PC-9 (cell line): ENCODE measurements at regions of chr4 and their contacts with region 1.

Region 1: GRCh38 chr4:47836641-47837093 is 1.2 kb downstream of the CORIN start:
- DNase-seq: peak; percentile 59 to 74
- H3K4me3 ChIP-seq: peak overlapping the region; percentile 73
- H3K27ac ChIP-seq: no peak overlapping the region
- H3K4me1 ChIP-seq: no peaks in the 10 kb centered on the region; the same call in 1 of the 2 replicates
- H3K27me3 ChIP-seq: no peaks in the 10 kb centered on the region
- CTCF ChIP-seq: peak; percentile 70

Region 2: DNA sequence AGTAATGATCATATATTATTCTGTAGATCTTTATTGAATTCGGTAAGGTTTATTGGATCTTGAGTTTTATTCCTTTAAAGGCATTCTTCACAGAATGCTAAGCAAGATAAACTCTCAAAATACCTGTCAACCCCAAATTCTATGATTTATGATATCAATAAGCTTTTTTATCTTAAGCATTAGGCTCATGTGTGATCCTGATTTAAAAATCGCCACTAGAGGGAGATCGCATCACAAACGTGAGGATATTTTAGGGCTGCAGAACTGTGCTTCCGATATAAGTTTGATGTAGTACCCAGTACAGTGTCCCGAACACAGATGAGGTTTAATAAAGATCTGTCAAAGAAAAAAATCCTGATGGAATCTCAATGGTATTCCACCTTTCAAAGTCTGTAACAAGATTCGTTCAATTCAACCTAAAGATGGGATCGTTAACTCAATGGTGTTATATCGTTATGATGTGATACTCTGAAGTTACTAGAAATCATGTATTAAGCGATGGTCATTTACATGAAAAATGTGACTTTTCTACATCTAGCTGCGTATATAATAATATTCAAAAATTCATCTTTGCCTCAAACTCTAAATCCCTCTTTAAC is 167.8 kb before region 1 on chr4:
- CTCF ChIA-PET with region 1: interaction called, 5 read pairs
- POLR2A ChIA-PET with region 1: interaction called, 3 read pairs
- intact Hi-C with region 1: loop called (anchors 5 kb)
- DNase-seq: peak in 1 of 2 experiments; percentile 3
- H3K4me3 ChIP-seq: no peak overlapping the region
- H3K27ac ChIP-seq: no peak overlapping the region
- H3K4me1 ChIP-seq: no peaks in the 10 kb centered on the region
- H3K27me3 ChIP-seq: no peaks in the 10 kb centered on the region
- CTCF ChIP-seq: peak; percentile 83

Region 3: DNA sequence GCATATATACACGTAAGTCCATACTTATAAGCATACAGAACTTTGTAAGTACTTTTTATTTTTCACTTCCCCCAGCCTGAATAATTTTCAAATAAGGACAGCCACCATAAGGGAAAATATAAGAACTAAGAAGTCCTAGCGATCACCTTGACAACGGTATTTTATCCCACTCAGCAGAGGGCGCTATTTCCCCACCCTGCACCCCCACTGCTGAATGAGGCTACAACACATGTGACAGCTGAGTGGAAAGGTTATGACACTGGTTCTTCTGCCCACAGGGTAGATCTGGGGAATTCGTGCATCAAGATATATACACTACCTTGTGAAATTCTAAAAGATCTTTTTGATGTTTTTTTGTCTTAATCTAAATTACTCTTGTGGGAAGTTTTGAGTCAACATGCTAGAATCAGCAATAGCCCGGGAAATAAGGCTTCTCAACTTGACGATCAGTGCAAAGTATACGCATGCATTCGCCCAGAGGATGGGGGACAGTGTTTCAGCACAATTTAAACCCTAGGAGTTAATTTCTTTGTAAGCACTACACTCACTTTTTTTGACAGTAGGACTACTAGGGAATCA is 150.3 kb before region 1 on chr4:
- CTCF ChIA-PET with region 1: interaction called, 3 read pairs
- POLR2A ChIA-PET with region 1: interaction called, 3 read pairs
- intact Hi-C with region 1: loop called (anchors 5 kb)
- DNase-seq: peak in 1 of 2 experiments; percentile 41
- H3K4me3 ChIP-seq: no peak overlapping the region
- H3K27ac ChIP-seq: no peak overlapping the region
- H3K4me1 ChIP-seq: no peaks in the 10 kb centered on the region
- H3K27me3 ChIP-seq: no peaks in the 10 kb centered on the region
- CTCF ChIP-seq: peak; percentile 68

Region 4: DNA sequence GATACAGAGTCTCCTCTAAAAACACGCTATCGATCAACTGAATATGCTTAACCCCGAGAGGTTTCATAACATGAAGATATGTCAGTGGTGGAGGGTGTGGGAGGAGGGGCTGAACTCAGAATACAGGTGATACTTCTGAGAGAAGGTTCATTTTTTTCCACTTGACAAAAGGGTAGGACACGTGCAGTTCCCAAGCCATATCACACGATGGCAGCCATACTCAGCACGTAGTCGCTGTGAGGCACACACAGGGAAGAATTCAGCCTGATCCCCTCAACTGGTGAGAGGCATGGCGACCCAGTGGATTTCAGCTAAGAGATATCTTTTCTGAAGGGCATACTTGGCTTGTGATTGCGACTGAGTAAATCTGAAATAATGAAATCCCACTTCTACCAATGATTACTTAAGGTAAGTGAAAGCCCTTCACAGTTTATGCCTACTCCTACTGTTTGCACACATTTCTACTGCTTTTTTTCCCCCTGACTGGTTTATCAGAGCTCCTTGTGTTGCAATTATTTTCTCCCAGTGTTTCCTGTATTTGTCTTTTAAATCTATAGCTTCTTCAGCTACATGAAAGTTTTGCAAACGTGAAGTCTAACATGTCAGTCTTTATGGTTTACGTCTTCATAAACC is 131.9 kb before region 1 on chr4:
- CTCF ChIA-PET with region 1: interaction called, 6 read pairs
- POLR2A ChIA-PET with region 1: no interaction called
- intact Hi-C with region 1: loop called (anchors 2 kb)
- DNase-seq: peak in 1 of 2 experiments; percentile 16
- H3K4me3 ChIP-seq: no peak overlapping the region
- H3K27ac ChIP-seq: no peak overlapping the region
- H3K4me1 ChIP-seq: no peaks in the 10 kb centered on the region
- H3K27me3 ChIP-seq: no peaks in the 10 kb centered on the region
- CTCF ChIP-seq: peak; percentile 49; the same call in 1 of the 2 replicates

Region 5: GRCh38 chr4:47784222-47784621 is 52.4 kb before region 1 on chr4:
- CTCF ChIA-PET with region 1: no interaction called
- POLR2A ChIA-PET with region 1: no interaction called
- intact Hi-C with region 1: no loop called
- DNase-seq: no peak
- H3K4me3 ChIP-seq: no peak overlapping the region
- H3K27ac ChIP-seq: no peak overlapping the region
- H3K4me1 ChIP-seq: no peaks in the 10 kb centered on the region
- H3K27me3 ChIP-seq: no peaks in the 10 kb centered on the region
- CTCF ChIP-seq: no peak